ENCODE measurements at regions of chr2 and their contacts with region 1.

Region 1: GRCh38 chr2:175167792-175168563 is at the start of gene ATF2:
- DNase-seq: peak; percentile 99 to 100
- H3K4me3 ChIP-seq: peak within 1 kb of the TSS; percentile 81 to 83
- H3K27ac ChIP-seq: peak within 1 kb of the TSS; percentile 95 to 96
- H3K4me1 ChIP-seq: peaks cover 0 to 3% of the 10 kb centered on the region in 2 donors
- H3K27me3 ChIP-seq: no peaks in the 10 kb centered on the region
- CTCF ChIP-seq: no peak
- total RNA-seq, gene ATF2: 84.8 TPM

Region 2: DNA sequence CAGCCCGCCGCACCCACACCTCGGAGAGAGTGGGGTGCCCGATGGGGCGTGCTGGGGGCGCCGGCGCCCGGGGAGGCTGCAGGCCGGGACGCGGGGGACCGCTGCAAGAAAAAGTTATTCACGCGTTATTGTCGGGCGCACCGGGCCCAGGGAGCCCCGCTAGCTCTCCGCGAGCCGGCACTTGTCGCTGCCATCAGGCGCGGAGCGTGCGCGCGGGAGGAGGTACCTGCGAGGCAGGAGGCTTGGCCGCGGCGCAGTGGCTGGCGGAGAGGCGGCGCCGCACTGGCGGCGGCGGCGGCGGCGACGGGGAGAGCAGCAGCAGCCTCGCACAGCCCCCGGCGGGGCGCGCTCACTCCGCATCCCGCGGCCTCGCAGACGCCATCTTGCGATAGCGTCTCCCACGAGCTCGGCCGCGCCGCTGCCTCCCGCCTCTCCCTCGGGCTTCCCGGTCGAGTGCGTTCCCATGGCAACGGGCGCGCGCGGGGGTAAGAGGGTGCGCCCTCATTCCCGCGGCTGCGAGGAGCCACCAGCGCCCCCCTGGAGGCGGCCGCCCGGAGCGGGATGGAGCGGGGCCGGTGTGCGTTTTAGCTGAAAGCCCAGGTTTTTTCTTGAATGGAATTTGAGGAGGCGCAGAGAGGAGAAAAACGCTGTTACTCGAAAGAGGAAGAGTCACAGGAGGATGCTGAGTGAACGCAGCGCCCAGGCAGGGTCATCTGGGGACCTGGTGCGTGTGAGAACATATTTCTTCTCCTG is 162.8 kb before region 1 on chr2 and contains the start of gene CHN1:
- intact Hi-C with region 1: loop called (anchors 10 kb)
- DNase-seq: peak in 1 of 2 donors; percentile 88
- H3K4me3 ChIP-seq: peak within 1 kb of the TSS; percentile 86 to 96
- H3K27ac ChIP-seq: peak within 1 kb of the TSS; percentile 88 to 96
- H3K4me1 ChIP-seq: peaks cover 0 to 6% of the 10 kb centered on the region in 2 donors
- H3K27me3 ChIP-seq: no peaks in the 10 kb centered on the region
- CTCF ChIP-seq: peak in 1 of 3 experiments; percentile 16
- total RNA-seq, gene CHN1: 7.8 TPM

Region 3: GRCh38 chr2:175181104-175181876 is 13.3 kb after region 1 on chr2 and contains the start of gene ATP5MC3:
- intact Hi-C with region 1: loop called (anchors 1 kb)
- DNase-seq: peak; percentile 76 to 95
- H3K4me3 ChIP-seq: peak within 1 kb of the TSS; percentile 86 to 89
- H3K27ac ChIP-seq: peak within 1 kb of the TSS; percentile 78 to 84
- H3K4me1 ChIP-seq: peaks cover 0 to 8% of the 10 kb centered on the region in 2 donors
- H3K27me3 ChIP-seq: no peaks in the 10 kb centered on the region
- CTCF ChIP-seq: peak in 1 of 3 experiments; percentile 13
- total RNA-seq, gene ATP5MC3: 25.5 TPM

Region 4: GRCh38 chr2:175877845-175878544 is 710.0 kb after region 1 on chr2:
- intact Hi-C with region 1: loop called (anchors 10 kb)
- DNase-seq: no peak
- H3K4me3 ChIP-seq: no peak overlapping the region
- H3K27ac ChIP-seq: peak overlapping the region in 1 of 2 donors; percentile 37
- H3K4me1 ChIP-seq: peaks cover 0 to 13% of the 10 kb centered on the region in 2 donors
- H3K27me3 ChIP-seq: no peaks in the 10 kb centered on the region
- CTCF ChIP-seq: no peak

Measured in ascending aorta (tissue), 2 donors.